ENCODE measurements at regions of chr3 and their contacts with region 1.

Region 1: DNA sequence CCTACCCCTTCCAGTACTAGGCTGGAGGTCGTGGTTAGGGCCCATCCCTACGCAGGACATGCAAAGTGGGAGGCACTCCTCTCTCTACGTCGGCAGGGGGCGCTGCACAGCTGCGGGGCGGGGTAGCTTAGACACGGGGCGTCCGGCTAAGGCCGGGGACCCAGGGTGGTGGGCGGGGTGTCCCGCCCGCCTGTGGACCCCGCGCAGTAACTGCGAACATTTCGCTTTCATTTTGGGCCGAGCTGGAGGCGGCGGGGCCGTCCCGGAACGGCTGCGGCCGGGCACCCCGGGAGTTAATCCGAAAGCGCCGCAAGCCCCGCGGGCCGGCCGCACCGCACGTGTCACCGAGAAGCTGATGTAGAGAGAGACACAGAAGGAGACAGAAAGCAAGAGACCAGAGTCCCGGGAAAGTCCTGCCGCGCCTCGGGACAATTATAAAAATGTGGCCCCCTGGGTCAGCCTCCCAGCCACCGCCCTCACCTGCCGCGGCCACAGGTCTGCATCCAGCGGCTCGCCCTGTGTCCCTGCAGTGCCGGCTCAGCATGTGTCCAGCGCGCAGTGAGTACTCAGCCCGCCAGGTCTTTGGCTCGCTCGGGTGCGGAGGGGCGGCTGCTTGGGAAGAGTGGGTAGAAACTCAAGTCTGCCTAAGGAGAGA is at the start of gene IL12A:
- DNase-seq: peak; percentile 85
- ATAC-seq: peak; percentile 97
- H3K4me3 Mint-ChIP-seq: peak within 1 kb of the TSS; percentile 77
- H3K27ac Mint-ChIP-seq: no peak within 1 kb of the TSS
- H3K4me1 Mint-ChIP-seq: peaks cover 14% of the 10 kb centered on the region
- H3K27me3 Mint-ChIP-seq: peaks cover 15% of the 10 kb centered on the region
- total RNA-seq, gene IL12A: not detected

Region 2: GRCh38 chr3:159941038-159941944 is 47.5 kb before region 1 on chr3:
- CTCF ChIA-PET with region 1: no interaction called
- POLR2A ChIA-PET with region 1: no interaction called
- DNase-seq: no peak
- ATAC-seq: no peak
- H3K4me3 Mint-ChIP-seq: no peak overlapping the region
- H3K27ac Mint-ChIP-seq: no peak overlapping the region
- H3K4me1 Mint-ChIP-seq: peaks cover 4% of the 10 kb centered on the region
- H3K27me3 Mint-ChIP-seq: peaks cover 3% of the 10 kb centered on the region

Region 3: GRCh38 chr3:159978353-159978752 is 10.4 kb before region 1 on chr3:
- CTCF ChIA-PET with region 1: interaction called, 12 read pairs
- POLR2A ChIA-PET with region 1: no interaction called
- DNase-seq: no peak
- ATAC-seq: no peak
- H3K4me3 Mint-ChIP-seq: no peak overlapping the region
- H3K27ac Mint-ChIP-seq: no peak overlapping the region
- H3K4me1 Mint-ChIP-seq: no peaks in the 10 kb centered on the region
- H3K27me3 Mint-ChIP-seq: peaks cover 22% of the 10 kb centered on the region

Region 4: GRCh38 chr3:160003520-160004128 is 14.9 kb after region 1 on chr3:
- CTCF ChIA-PET with region 1: interaction called, 169 read pairs
- POLR2A ChIA-PET with region 1: no interaction called
- DNase-seq: peak; percentile 52
- ATAC-seq: peak; percentile 74
- H3K4me3 Mint-ChIP-seq: no peak overlapping the region
- H3K27ac Mint-ChIP-seq: no peak overlapping the region
- H3K4me1 Mint-ChIP-seq: no peaks in the 10 kb centered on the region
- H3K27me3 Mint-ChIP-seq: no peaks in the 10 kb centered on the region

Region 5: GRCh38 chr3:160012108-160012507 is 23.4 kb after region 1 on chr3:
- CTCF ChIA-PET with region 1: interaction called, 169 read pairs
- POLR2A ChIA-PET with region 1: no interaction called
- DNase-seq: no peak
- ATAC-seq: no peak
- H3K4me3 Mint-ChIP-seq: no peak overlapping the region
- H3K27ac Mint-ChIP-seq: no peak overlapping the region
- H3K4me1 Mint-ChIP-seq: peaks cover 8% of the 10 kb centered on the region
- H3K27me3 Mint-ChIP-seq: no peaks in the 10 kb centered on the region